Activated CD8-positive, alpha-beta T cell treated with anti-CD3 and anti-CD28 coated beads for 36 hours (primary cell): ENCODE measurements at regions of chr22 and their contacts with region 1.

Region 1: GRCh38 chr22:36775964-36776669 is at the start of gene IFT27:
- DNase-seq: peak; percentile 100
- ATAC-seq: peak; percentile 93
- H3K4me3 Mint-ChIP-seq: peak within 1 kb of the TSS; percentile 79
- H3K27ac Mint-ChIP-seq: peak within 1 kb of the TSS; percentile 94
- H3K4me1 Mint-ChIP-seq: peaks cover 32% of the 10 kb centered on the region
- H3K27me3 Mint-ChIP-seq: no peaks in the 10 kb centered on the region
- CTCF ChIP-seq: no peak
- total RNA-seq, gene IFT27: 20.0 to 21.9 TPM

Region 2: GRCh38 chr22:36757668-36758211 is 18.4 kb before region 1 on chr22:
- CTCF ChIA-PET with region 1: interaction called, 51 read pairs
- POLR2A ChIA-PET with region 1: no interaction called
- intact Hi-C with region 1: no loop called
- DNase-seq: peak; percentile 90
- ATAC-seq: peak; percentile 98
- H3K4me3 Mint-ChIP-seq: no peak overlapping the region
- H3K27ac Mint-ChIP-seq: no peak overlapping the region
- H3K4me1 Mint-ChIP-seq: no peaks in the 10 kb centered on the region
- H3K27me3 Mint-ChIP-seq: peaks cover 1% of the 10 kb centered on the region
- CTCF ChIP-seq: peak; percentile 83